ENCODE measurements at regions of chr9 and their contacts with region 1.

Region 1: DNA sequence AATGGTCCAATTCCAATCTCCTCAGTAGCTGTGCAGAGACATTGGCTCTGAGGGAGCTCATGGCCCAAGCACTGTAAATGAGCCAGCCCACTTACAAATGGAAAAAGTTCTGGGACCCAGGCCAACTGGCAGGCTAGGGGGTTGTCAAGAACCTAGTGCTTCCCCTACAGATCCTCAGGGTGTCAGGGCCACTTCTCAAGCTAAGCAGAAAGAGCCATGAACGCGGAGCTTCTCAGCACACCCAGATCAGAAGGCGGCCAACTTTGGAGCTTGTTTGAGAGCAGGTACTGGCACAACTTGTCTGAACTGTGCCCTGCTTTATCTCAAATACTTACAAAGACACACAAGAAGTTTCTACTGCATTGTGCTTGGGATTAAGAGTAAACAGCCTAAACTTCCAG is 17.5 kb downstream of the TLE1 start:
- DNase-seq: peak; percentile 69
- H3K4me3 ChIP-seq: no peak overlapping the region
- H3K27ac ChIP-seq: no peak overlapping the region
- H3K4me1 ChIP-seq: no peaks in the 10 kb centered on the region
- H3K27me3 ChIP-seq: no peaks in the 10 kb centered on the region
- CTCF ChIP-seq: no peak

Region 2: DNA sequence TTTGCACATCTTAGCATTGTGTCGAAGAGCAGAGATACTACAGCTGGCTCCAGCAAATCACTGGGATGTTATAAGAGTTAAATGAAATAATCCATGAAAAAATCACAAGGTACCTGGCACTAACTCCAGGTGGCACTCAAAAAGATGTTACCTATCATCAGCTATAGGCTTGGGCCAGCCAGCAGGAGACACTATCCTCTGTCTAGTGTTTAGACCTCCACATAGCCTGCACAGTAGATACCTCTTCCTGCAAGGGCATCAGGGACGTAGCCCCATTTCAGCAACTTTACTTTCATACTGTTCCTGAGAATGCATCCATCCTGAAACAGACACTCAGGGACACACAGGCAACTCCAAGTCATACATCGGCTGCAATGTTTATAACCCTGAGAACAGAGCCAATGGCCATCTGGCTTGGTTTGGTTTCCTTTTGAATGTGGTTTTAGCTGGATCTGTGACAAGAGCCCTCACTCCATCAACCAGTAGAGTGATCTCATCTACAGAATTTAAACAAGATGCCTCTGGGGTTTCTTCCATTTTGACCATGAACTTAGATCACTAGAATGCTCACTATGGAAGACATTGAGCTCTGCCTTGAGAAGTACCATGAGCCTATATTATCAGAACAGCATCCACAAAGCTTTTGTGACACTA is 52.4 kb before region 1 on chr9:
- intact Hi-C with region 1: loop called (anchors 10 kb)
- DNase-seq: no peak
- H3K4me3 ChIP-seq: no peak overlapping the region
- H3K27ac ChIP-seq: no peak overlapping the region
- H3K4me1 ChIP-seq: no peaks in the 10 kb centered on the region
- H3K27me3 ChIP-seq: no peaks in the 10 kb centered on the region
- CTCF ChIP-seq: no peak

Measured in colonic mucosa (tissue), 4 donors.